ENCODE measurements at regions of chr15 and their contacts with region 1.

Region 1: DNA sequence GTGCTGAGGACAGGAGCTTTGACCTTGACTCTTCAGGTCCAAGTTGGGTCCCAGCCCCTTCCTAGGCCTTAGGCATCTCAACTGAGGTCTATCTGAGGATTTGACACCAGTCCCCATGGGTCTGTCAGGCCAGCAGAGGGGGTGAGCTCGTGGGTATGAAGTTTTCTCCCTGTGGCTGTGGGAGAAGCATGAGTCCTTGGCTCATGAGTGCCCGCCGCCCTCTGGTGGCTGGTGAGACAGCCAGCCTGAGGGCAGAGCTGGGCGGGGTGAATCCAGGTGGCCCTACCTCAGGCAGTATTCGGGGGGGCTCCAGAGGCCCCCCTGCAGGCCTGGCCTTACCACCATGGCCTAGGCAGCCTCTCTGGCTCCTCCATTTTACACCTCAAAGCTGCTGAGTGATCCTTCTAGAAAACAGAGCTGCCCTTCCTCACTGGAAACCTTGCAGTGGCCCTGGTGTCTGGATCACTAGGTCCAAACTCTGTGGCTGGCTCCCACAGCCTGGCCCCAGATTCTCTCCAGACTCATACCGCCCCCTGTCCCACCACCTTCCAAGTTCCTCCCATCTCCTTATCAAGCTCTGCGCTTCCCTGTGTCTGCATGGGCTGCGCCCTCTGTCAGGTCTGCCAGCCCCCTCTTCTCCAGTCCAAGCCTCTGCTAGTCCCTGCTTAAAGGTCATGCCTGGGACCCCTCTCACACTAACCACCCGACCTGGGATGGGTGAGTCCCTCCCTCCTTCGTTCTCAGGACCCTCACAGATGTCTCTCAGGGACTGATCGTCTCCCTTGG is 16.1 kb downstream of the SH2D7 start:
- DNase-seq: peak; percentile 85 to 94 (median 91)
- H3K4me3 ChIP-seq: no peak overlapping the region
- H3K27ac ChIP-seq: no peak overlapping the region
- H3K4me1 ChIP-seq: peaks cover 0 to 9% of the 10 kb centered on the region in 2 donors
- H3K27me3 ChIP-seq: no peaks in the 10 kb centered on the region
- CTCF ChIP-seq: peak; percentile 77 to 99 (median 98)
- POLR2A ChIP-seq: no peak

Region 2: GRCh38 chr15:77939851-77940250 is 168.6 kb before region 1 on chr15:
- intact Hi-C with region 1: no loop called
- DNase-seq: no peak
- H3K4me3 ChIP-seq: no peak overlapping the region
- H3K27ac ChIP-seq: no peak overlapping the region
- H3K4me1 ChIP-seq: peaks cover 0 to 2% of the 10 kb centered on the region in 2 donors
- H3K27me3 ChIP-seq: no peaks in the 10 kb centered on the region
- CTCF ChIP-seq: no peak
- POLR2A ChIP-seq: no peak

Region 3: GRCh38 chr15:77959432-77959879 is 149.0 kb before region 1 on chr15:
- intact Hi-C with region 1: loop called in 1 of 2 experiments (anchors 2 kb)
- DNase-seq: peak; percentile 68 to 91 (median 81)
- H3K4me3 ChIP-seq: peak overlapping the region in 1 of 4 donors; percentile 39
- H3K27ac ChIP-seq: no peak overlapping the region
- H3K4me1 ChIP-seq: no peaks in the 10 kb centered on the region
- H3K27me3 ChIP-seq: no peaks in the 10 kb centered on the region
- CTCF ChIP-seq: peak; percentile 88 to 97 (median 92)
- POLR2A ChIP-seq: no peak

Region 4: DNA sequence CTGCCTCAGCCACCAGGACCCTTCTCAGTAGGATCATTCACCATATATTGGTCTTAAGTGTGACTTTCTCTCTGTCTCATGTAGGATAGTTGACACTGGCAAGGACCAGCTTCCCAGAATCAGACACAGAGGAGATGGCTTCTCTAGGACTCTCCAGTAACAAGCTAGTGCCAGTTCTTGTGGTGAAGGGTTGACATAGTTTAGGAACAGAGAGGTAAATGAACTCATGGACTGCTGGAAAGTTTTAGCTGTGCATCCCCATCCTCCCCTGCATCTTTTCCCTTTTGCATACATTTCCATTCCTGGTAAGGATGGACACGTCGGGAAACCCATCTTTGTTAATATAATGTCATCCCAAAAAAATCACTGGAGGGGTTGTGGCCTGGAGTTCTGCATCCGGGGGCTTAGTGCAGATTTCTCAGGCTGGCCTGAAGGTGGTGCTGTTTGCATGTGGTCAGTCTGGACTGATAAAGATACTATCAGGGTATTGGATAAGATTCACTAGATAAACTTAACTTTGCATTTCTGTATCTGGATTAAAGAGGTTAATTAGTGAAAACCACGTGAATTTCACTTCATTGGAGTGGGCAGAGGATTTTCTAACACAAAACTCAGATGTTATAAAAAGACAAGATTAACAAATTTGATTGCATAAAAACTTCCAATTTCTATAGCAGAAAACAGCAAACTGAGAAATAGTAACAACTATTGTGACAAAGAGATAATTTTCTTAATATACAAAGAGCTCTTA is 141.8 kb before region 1 on chr15:
- intact Hi-C with region 1: loop called in 1 of 2 experiments (anchors 5 kb)
- DNase-seq: peak in 5 of 7 donors; percentile 52 to 71 (median 61)
- H3K4me3 ChIP-seq: no peak overlapping the region
- H3K27ac ChIP-seq: no peak overlapping the region
- H3K4me1 ChIP-seq: no peaks in the 10 kb centered on the region
- H3K27me3 ChIP-seq: no peaks in the 10 kb centered on the region
- CTCF ChIP-seq: peak; percentile 70 to 89 (median 82)
- POLR2A ChIP-seq: no peak

Region 5: GRCh38 chr15:78000091-78000926 is 108.2 kb before region 1 on chr15:
- intact Hi-C with region 1: loop called in 1 of 2 experiments (anchors 2 kb)
- DNase-seq: peak; percentile 89 to 96 (median 93)
- H3K4me3 ChIP-seq: no peak overlapping the region
- H3K27ac ChIP-seq: peak overlapping the region in 1 of 5 donors; percentile 51
- H3K4me1 ChIP-seq: peaks cover 10 to 30% of the 10 kb centered on the region in 2 donors
- H3K27me3 ChIP-seq: no peaks in the 10 kb centered on the region
- CTCF ChIP-seq: peak in 5 of 6 experiments; percentile 67 to 95 (median 86)
- POLR2A ChIP-seq: peak in 1 of 2 donors; percentile 39

Region 6: DNA sequence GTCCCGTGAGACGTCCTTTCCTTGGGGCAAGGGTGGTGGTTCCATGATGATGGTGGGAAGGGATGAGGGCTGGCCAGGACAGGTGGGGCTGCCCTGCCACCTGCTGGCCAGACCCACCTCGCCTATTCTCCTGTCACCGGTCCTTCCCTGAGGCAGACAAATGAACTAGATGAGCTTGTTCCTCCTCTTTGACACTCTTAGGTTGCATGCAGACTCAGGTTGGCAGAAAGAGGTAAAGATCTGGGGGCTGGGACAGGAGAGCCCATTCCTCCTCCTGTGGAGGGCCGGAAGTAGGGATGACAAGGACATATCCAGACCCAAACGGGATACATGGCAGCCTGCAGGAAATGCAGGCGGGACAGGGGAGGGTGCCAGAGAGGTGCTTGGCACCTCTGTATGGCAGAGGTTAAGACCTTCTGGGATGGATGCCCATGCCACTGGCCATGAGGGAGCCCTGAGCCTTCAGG is 87.3 kb after region 1 on chr15:
- intact Hi-C with region 1: loop called (anchors 5 kb)
- DNase-seq: peak in 5 of 7 donors; percentile 33 to 69 (median 51)
- H3K4me3 ChIP-seq: no peak overlapping the region
- H3K27ac ChIP-seq: no peak overlapping the region
- H3K4me1 ChIP-seq: no peaks in the 10 kb centered on the region
- H3K27me3 ChIP-seq: no peaks in the 10 kb centered on the region
- CTCF ChIP-seq: peak; percentile 49 to 84 (median 78)
- POLR2A ChIP-seq: no peak

Region 7: DNA sequence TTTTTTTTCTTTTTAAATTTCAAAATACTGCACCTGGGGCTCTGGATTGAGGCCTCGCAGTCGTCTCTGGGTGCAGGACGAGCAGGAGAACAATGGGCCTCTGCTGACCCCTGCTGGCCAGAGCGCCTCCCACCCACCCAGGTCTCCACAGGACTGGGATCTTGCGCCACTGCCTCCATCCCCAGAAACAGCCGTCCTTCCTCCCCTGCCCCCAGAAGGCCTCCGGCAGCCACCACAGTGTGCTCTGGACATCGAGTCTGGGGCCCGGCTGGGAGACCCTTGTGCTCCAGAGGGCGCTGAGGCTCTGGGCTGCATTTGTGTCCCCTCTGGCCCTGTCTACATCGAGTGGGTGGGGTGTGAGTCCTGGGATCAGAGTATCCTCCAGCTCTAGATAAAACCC is 132.5 kb after region 1 on chr15:
- intact Hi-C with region 1: loop called in 1 of 2 experiments (anchors 2 kb)
- DNase-seq: peak; percentile 83 to 95 (median 91)
- H3K4me3 ChIP-seq: no peak overlapping the region
- H3K27ac ChIP-seq: no peak overlapping the region
- H3K4me1 ChIP-seq: peaks cover 5 to 7% of the 10 kb centered on the region in 2 donors
- H3K27me3 ChIP-seq: no peaks in the 10 kb centered on the region
- CTCF ChIP-seq: peak; percentile 77 to 95 (median 88)
- POLR2A ChIP-seq: no peak

Region 8: GRCh38 chr15:78415286-78415685 is 306.8 kb after region 1 on chr15:
- intact Hi-C with region 1: loop called in 1 of 2 experiments (anchors 10 kb)
- DNase-seq: no peak
- H3K4me3 ChIP-seq: no peak overlapping the region
- H3K27ac ChIP-seq: no peak overlapping the region
- H3K4me1 ChIP-seq: no peaks in the 10 kb centered on the region
- H3K27me3 ChIP-seq: peaks cover 10% of the 10 kb centered on the region
- CTCF ChIP-seq: no peak
- POLR2A ChIP-seq: no peak

Measured in adrenal gland (tissue), 19 donors.